Spleen (tissue), 13 donors: ENCODE measurements at regions of chr10 and their contacts with region 1.

Region 1: GRCh38 chr10:30392564-30392990 is 41.4 kb upstream of the MAP3K8 start:
- DNase-seq: peak; percentile 94
- H3K4me3 ChIP-seq: peak overlapping the region in 2 of 8 donors; percentile 20 to 48
- H3K27ac ChIP-seq: no peak overlapping the region
- H3K4me1 ChIP-seq: peaks cover 2 to 27% (median 7%) of the 10 kb centered on the region in 6 donors
- H3K27me3 ChIP-seq: peaks cover 0 to 10% (median 0%) of the 10 kb centered on the region in 7 donors
- CTCF ChIP-seq: peak; percentile 81 to 95 (median 93)
- POLR2A ChIP-seq: no peak

Region 2: GRCh38 chr10:30591249-30591670 is 198.7 kb after region 1 on chr10:
- intact Hi-C with region 1: loop called (anchors 5 kb)
- DNase-seq: no peak
- H3K4me3 ChIP-seq: no peak overlapping the region
- H3K27ac ChIP-seq: no peak overlapping the region
- H3K4me1 ChIP-seq: peaks cover 7 to 37% (median 18%) of the 10 kb centered on the region in 6 donors
- H3K27me3 ChIP-seq: no peaks in the 10 kb centered on the region
- CTCF ChIP-seq: peak; percentile 62 to 89 (median 82)
- POLR2A ChIP-seq: no peak